ENCODE measurements at regions of chr5 and their contacts with region 1.

Region 1: DNA sequence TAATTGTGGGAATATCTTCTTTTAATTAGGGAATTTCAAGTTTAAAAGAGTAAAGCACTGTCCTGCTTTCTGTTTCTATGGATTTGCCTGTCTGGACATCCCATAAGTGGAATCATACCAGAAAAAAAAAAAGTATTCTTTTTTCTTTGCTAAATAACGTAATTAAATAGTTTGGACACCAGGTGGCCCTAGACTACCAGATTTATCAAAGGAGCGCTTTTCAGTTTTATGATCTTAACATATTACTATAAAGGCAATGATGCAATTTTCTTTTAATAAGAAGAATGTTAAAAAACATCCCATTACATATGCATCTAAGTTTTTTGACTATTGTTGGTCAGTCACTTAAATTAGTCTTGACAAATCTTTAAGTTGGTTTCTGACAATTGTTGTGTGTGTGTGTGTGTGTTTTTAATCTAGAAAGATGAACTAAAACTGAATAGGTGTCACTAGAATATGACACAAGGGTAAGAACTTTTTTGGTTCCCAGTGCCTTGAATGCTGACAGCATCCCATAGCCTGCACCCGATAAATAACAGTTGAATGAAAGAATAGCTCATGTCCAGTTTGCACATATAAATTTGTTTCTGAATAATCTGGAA is 49.5 kb downstream of the C5orf22 start:
- DNase-seq: no peak

Region 2: DNA sequence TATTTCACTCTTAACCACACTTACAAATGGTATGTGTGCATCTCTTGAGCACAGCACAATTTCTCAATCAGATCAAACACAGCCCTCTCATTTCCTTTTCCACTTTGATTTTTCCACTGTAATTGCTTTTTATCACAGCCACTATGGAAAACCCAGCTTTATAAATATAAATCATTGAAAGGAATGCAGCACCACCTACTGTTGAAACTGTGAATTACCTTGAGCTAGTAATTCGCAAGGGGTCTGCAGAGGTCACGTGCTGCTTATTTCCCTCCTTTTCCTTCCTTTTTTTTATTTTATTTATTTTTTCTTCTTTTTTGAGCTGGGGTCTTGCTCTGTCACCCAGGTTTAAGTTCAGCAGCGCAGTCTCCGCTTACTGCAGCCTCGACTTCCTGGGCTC is 311.2 kb before region 1 on chr5:
- intact Hi-C with region 1: no loop called
- DNase-seq: no peak

Region 3: GRCh38 chr5:31809050-31809870 is 227.7 kb after region 1 on chr5:
- intact Hi-C with region 1: loop called (anchors 1 kb)
- DNase-seq: peak; percentile 86

Region 4: DNA sequence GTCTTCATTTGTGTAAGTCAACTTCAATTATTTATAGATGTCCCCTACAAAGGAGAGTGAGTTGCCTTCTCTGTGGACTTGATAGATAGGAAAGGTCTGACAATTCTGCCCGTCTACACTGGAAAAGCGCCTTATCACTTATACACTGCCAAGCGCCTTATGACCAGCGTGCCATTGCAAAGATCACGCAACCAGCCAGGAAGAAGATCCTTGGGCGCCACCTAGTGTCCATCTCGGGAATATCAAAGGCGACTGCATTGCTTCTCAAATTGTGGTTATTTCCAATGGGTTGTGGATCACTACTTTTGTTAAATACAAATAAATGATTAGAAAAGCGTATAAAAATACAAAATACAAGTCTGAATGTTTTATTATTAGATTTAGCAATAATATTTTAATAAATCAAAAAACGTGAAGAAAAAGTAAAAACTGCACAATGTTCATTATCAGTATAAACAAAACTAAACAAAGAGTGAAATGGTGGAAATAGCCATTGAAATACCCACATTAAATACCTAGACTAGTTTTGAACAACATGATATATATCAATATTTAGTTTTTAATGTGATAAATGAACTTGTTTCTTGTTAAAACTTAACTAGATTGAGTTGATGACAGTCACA is 1031.6 kb after region 1 on chr5:
- intact Hi-C with region 1: no loop called
- DNase-seq: peak; percentile 87